ENCODE measurements at regions of chr18 and their contacts with region 1.

Region 1: GRCh38 chr18:45974088-45974536 is 7.0 kb upstream of the EPG5 start:
- DNase-seq: peak; percentile 57
- H3K4me3 ChIP-seq: peak overlapping the region in 1 of 2 experiments; percentile 14; a peak in 2 of 4 replicates
- H3K27ac ChIP-seq: peak overlapping the region in 1 of 2 experiments; percentile 22; a peak in 1 of 4 replicates
- H3K4me1 ChIP-seq: no peaks in the 10 kb centered on the region
- H3K27me3 ChIP-seq: no peaks in the 10 kb centered on the region
- CTCF ChIP-seq: peak; percentile 91
- EP300 ChIP-seq: no peak
- RAD21 ChIP-seq: peak; percentile 94

Region 2: DNA sequence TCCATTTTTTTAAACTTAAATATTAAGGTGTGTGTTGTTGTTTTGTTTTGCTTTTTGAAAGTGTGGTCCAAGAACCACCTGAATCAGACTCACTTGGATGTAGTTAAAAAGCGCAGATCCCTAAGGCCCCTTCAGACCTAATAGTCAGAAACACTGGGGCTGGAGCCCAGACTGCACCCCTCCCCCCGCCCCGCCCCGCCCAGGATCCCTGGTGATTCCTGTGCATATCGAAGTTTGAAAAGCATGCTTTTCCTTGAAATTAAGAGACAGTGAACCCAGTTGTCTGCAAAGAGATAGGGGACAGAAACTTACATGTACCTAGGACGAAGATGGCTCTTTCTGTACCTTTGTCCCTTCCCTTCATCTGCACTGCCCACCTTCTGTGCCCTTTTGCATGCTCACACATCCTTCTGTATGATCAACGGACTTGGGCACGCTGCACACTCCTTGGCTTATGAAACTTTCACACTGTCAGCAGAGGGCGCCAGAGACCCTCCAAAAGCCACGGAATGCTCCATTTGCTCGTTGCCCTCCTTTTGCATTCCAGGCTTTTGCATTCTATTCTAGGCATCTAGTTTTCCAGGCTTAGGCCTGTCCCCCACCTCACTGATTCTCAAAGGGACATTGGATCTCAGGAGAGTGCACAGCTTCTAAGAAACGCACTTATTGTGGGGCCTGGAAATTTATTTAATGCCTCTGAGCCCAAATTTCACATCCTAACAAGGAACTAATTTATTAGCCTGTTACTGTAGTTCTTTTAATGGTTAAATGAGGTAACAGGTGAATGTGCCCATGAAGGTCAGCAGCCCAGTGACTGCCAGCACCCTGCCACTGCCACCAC is 282.9 kb before region 1 on chr18:
- CTCF ChIA-PET with region 1: interaction called, 17 read pairs
- POLR2A ChIA-PET with region 1: no interaction called
- DNase-seq: peak; percentile 69
- H3K4me3 ChIP-seq: no peak overlapping the region; a peak in 1 of 4 replicates
- H3K27ac ChIP-seq: no peak overlapping the region
- H3K4me1 ChIP-seq: no peaks in the 10 kb centered on the region; a peak in 1 of 4 replicates
- H3K27me3 ChIP-seq: no peaks in the 10 kb centered on the region
- CTCF ChIP-seq: peak; percentile 90
- EP300 ChIP-seq: no peak
- RAD21 ChIP-seq: peak; percentile 96